Heart right ventricle (tissue), 16 donors: ENCODE measurements at regions of chr11 and their contacts with region 1.

Region 1: GRCh38 chr11:100687630-100688395 is 725 bp downstream of the ARHGAP42 start:
- DNase-seq: peak; percentile 29 to 66
- ATAC-seq: peak; percentile 48 to 77 (median 69)
- H3K4me3 ChIP-seq: peak overlapping the region; percentile 58 to 80 (median 73)
- H3K27ac ChIP-seq: peak overlapping the region; percentile 72 to 89 (median 85)
- H3K4me1 ChIP-seq: peaks cover 0 to 45% (median 15%) of the 10 kb centered on the region in 9 donors
- H3K27me3 ChIP-seq: peaks cover 0 to 12% (median 0%) of the 10 kb centered on the region in 7 donors
- CTCF ChIP-seq: peak; percentile 43 to 78 (median 63)

Region 2: DNA sequence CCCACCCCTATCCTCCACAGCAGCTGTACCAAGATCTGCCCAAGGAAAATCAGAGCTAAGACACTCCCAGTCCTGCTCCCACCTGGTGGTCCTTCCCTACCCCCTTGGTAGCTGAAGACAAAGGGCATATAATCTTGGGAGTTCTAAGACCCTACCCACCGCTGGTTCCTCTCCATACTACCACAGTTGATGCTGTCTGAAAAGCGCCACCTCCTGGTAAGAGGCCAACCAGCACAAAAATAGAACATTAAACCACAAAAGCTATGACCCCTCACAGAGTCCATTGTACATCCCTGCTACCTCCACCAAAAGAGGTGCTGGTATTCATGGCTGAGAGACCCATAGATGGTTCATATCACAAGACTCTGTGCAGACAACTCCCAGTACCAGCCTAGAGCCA is 162.2 kb before region 1 on chr11:
- intact Hi-C with region 1: no loop called
- DNase-seq: no peak
- ATAC-seq: no peak
- H3K4me3 ChIP-seq: no peak overlapping the region
- H3K27ac ChIP-seq: no peak overlapping the region
- H3K4me1 ChIP-seq: no peaks in the 10 kb centered on the region
- H3K27me3 ChIP-seq: no peaks in the 10 kb centered on the region
- CTCF ChIP-seq: no peak

Region 3: GRCh38 chr11:100581318-100581717 is 106.5 kb before region 1 on chr11:
- intact Hi-C with region 1: loop called in 6 of 10 experiments (anchors 5 to 10 kb)
- DNase-seq: no peak
- ATAC-seq: no peak
- H3K4me3 ChIP-seq: no peak overlapping the region
- H3K27ac ChIP-seq: no peak overlapping the region
- H3K4me1 ChIP-seq: peaks cover 0 to 32% (median 13%) of the 10 kb centered on the region in 9 donors
- H3K27me3 ChIP-seq: no peaks in the 10 kb centered on the region
- CTCF ChIP-seq: no peak

Region 4: DNA sequence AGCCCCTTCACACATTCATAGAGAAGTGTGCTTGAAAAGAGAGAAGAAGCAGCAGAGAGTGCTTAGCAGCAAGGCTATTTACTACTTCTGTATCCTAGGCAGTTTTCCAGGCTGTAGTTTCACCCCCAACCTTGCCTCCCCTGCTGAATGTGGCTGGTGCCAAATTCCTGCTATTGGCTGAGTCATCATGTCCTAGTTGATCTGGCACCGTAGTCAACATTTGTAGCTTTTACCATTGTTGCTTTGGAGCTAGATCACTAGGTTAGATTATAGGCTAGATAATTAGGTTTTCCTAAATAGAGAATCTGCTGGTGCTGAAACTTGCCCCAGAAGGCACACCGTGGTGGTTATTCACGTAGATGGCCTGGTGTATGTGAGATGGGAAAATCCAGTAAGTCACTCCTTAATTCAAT is 32.0 kb after region 1 on chr11:
- intact Hi-C with region 1: loop called in 2 of 10 experiments (anchors 5 kb)
- DNase-seq: peak; percentile 32 to 80
- ATAC-seq: peak; percentile 88 to 98 (median 94)
- H3K4me3 ChIP-seq: peak overlapping the region in 1 of 10 donors; percentile 8
- H3K27ac ChIP-seq: peak overlapping the region in 9 of 10 donors; percentile 24 to 80 (median 61)
- H3K4me1 ChIP-seq: peaks cover 0 to 51% (median 29%) of the 10 kb centered on the region in 9 donors
- H3K27me3 ChIP-seq: no peaks in the 10 kb centered on the region
- CTCF ChIP-seq: no peak

Region 5: GRCh38 chr11:100789500-100789899 is 101.7 kb after region 1 on chr11:
- intact Hi-C with region 1: loop called in 1 of 10 experiments (anchors 10 kb)
- DNase-seq: peak; percentile 25 to 46
- ATAC-seq: peak; percentile 44 to 85 (median 68)
- H3K4me3 ChIP-seq: no peak overlapping the region
- H3K27ac ChIP-seq: peak overlapping the region in 3 of 10 donors; percentile 13 to 41 (median 33)
- H3K4me1 ChIP-seq: peaks cover 0 to 53% (median 36%) of the 10 kb centered on the region in 9 donors
- H3K27me3 ChIP-seq: no peaks in the 10 kb centered on the region
- CTCF ChIP-seq: no peak

Region 6: GRCh38 chr11:100855466-100856067 is 167.8 kb after region 1 on chr11:
- intact Hi-C with region 1: loop called in 8 of 10 experiments (anchors 2 to 5 kb)
- DNase-seq: no peak
- ATAC-seq: peak in 2 of 8 donors; percentile 50 to 54
- H3K4me3 ChIP-seq: no peak overlapping the region
- H3K27ac ChIP-seq: no peak overlapping the region
- H3K4me1 ChIP-seq: peaks cover 0 to 13% (median 0%) of the 10 kb centered on the region in 9 donors
- H3K27me3 ChIP-seq: no peaks in the 10 kb centered on the region
- CTCF ChIP-seq: peak; percentile 59 to 81 (median 71)

Region 7: GRCh38 chr11:100930185-100930778 is 242.5 kb after region 1 on chr11:
- intact Hi-C with region 1: loop called in 8 of 10 experiments (anchors 2 to 10 kb)
- DNase-seq: peak in 1 of 2 donors; percentile 11
- ATAC-seq: peak in 4 of 8 donors; percentile 34 to 67 (median 62)
- H3K4me3 ChIP-seq: no peak overlapping the region
- H3K27ac ChIP-seq: no peak overlapping the region
- H3K4me1 ChIP-seq: peaks cover 0 to 17% (median 0%) of the 10 kb centered on the region in 9 donors
- H3K27me3 ChIP-seq: no peaks in the 10 kb centered on the region
- CTCF ChIP-seq: peak; percentile 42 to 76 (median 68)